ENCODE measurements at regions of chr19 and their contacts with region 1.

Region 1: DNA sequence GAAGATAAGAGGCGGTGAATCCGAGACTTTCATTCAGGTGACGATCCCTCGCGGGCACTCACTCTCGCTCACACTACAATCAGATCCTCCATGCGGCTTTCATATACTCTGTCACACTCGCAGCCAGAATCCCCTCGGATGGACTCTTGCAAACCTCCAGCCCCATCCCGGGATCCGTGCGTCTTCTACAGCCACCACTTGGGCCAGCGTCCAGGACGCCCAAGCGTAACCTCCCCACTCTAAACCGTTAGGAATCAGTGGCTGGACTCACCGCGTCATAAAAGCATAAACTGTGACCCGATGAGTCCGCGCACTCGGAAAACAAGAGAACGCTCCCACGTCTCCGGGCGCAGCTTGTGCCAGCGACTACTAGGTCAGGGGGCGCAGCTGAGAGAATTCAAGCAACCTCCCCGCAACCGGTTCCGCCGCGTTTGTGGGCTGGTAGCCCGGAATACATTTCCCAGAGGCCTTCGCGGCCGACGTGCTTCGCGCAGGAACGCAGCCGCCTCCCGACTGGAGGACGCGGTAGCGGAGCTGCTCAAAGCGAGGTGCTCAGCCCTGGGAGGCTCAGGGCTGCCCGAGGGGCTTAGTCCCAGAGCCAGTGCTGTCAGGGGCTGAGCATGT is 27.6 kb downstream of the ZNF607 start:
- DNase-seq: peak; percentile 69
- ATAC-seq: peak; percentile 94
- H3K4me3 Mint-ChIP-seq: peak overlapping the region; percentile 94
- H3K27ac Mint-ChIP-seq: peak overlapping the region; percentile 86
- H3K4me1 Mint-ChIP-seq: peaks cover 10% of the 10 kb centered on the region
- H3K27me3 Mint-ChIP-seq: no peaks in the 10 kb centered on the region
- CTCF ChIP-seq: no peak

Region 2: GRCh38 chr19:37779127-37780005 is 87.4 kb after region 1 on chr19 and contains the start of gene ZNF573:
- CTCF ChIA-PET with region 1: no interaction called
- POLR2A ChIA-PET with region 1: interaction called, 8 read pairs
- intact Hi-C with region 1: loop called (anchors 1 kb)
- DNase-seq: peak; percentile 70
- ATAC-seq: peak; percentile 86
- H3K4me3 Mint-ChIP-seq: peak within 1 kb of the TSS; percentile 91
- H3K27ac Mint-ChIP-seq: peak within 1 kb of the TSS; percentile 96
- H3K4me1 Mint-ChIP-seq: peaks cover 31% of the 10 kb centered on the region
- H3K27me3 Mint-ChIP-seq: no peaks in the 10 kb centered on the region
- CTCF ChIP-seq: no peak
- total RNA-seq, gene ZNF573: 18.7 and 19.8 TPM in 2 replicates